ENCODE measurements at regions of chr3 and their contacts with region 1.

Region 1: GRCh38 chr3:107753480-107753879 is 230.7 kb downstream of the BBX start:
- DNase-seq: no peak
- ATAC-seq: peak; percentile 78
- H3K4me3 ChIP-seq: no peak overlapping the region
- H3K27ac ChIP-seq: no peak overlapping the region
- H3K4me1 ChIP-seq: no peaks in the 10 kb centered on the region
- H3K27me3 ChIP-seq: no peaks in the 10 kb centered on the region

Region 2: GRCh38 chr3:107794664-107795443 is 41.4 kb after region 1 on chr3:
- intact Hi-C with region 1: loop called (anchors 5 kb)
- DNase-seq: no peak
- ATAC-seq: peak; percentile 83
- H3K4me3 ChIP-seq: no peak overlapping the region
- H3K27ac ChIP-seq: peak overlapping the region; percentile 22 to 83
- H3K4me1 ChIP-seq: peaks cover 1 to 14% of the 10 kb centered on the region in 2 donors
- H3K27me3 ChIP-seq: no peaks in the 10 kb centered on the region

Region 3: GRCh38 chr3:107846279-107846852 is 92.9 kb after region 1 on chr3:
- intact Hi-C with region 1: loop called (anchors 5 kb)
- DNase-seq: peak; percentile 78 to 91
- ATAC-seq: peak; percentile 83
- H3K4me3 ChIP-seq: no peak overlapping the region
- H3K27ac ChIP-seq: no peak overlapping the region
- H3K4me1 ChIP-seq: peaks cover 0 to 4% of the 10 kb centered on the region in 2 donors
- H3K27me3 ChIP-seq: no peaks in the 10 kb centered on the region